Sciatic nerve (tissue), 2 donors: ENCODE measurements at regions of chrX and their contacts with region 1.

Region 1: DNA sequence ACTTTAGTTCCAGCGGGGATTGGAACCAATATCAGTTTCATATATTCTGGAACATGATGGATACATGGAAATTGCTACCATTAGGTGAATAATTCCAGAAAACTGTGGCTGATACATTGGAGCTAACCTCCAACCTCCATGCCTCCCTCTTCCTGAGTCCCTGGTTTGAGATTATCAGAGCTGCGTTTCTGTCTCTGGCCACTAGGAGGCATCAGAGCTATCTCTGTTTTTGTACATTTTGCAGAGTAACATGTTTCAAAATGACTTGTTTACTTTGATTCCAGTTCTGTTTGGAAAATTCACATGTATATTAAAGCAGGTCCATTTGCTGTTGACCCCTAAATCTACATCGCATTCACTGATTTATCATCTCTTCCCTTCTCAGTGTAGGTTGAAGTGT is 2.4 kb upstream of the RAB40AL start:
- DNase-seq: no peak
- ATAC-seq: no peak

Region 2: DNA sequence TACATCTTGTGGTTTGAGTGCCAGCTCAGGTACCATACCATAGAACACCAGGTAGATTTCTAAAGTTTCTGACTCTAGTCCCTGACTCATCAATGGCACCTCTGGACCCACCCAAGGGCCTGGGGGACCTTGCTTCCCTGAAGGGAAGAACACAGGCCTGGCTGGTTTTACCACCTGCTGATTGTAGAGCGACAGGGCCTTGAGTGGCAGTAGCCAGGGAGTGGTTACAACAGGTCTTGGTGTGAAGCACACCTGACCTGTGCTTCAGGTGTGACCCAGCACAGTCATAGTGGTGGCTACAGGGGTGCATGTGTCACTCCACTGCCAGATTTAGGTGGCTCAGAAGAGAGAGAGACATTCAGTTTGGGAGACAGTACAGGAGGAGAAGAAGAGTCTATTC is 1070.7 kb before region 1 on chrX:
- intact Hi-C with region 1: no loop called
- DNase-seq: no peak
- ATAC-seq: no peak

Region 3: GRCh38 chrX:102892103-102892502 is 42.5 kb before region 1 on chrX:
- intact Hi-C with region 1: no loop called
- DNase-seq: no peak
- ATAC-seq: no peak

Region 4: DNA sequence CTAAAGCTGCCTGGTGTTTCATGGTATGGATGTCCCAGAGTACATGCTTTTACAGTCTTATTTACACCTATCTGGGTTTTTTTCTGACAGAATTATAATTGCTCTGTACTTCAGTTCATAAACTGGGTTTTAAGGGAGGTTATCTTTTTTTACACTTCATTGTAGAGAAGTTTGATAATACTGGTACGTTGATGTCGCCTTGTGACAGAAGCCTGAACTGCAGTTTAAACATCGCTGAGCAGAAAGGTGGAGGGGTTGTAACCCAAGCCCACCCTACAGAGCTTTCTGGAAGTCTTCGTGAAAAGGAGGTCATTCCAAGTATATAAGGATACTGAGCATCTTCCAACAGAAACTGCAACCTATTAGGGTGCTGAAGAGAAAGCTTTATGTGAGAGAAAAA is 82.9 kb after region 1 on chrX:
- intact Hi-C with region 1: loop called (anchors 5 kb)
- DNase-seq: no peak
- ATAC-seq: no peak

Region 5: DNA sequence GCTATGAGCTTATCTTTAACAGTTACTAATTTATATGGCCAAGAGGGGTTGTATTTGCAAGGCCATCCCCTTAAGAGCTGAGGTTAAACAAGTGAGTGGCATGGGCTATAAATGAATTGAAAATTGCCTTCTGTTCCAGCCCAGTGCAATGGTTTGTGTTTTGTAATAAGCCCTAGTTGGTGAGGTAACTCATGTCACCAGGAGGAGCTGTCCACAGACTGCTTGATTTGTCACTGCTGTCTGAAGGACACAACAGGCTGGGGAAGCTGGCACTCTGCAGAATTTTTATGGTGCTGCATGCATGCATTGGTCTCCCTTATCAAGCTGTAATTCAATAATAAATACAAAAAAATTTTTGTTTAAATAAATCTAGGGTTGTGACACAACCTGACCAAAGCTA is 1855.2 kb after region 1 on chrX:
- intact Hi-C with region 1: no loop called
- DNase-seq: no peak
- ATAC-seq: no peak